GM10248 (cell line): ENCODE measurements at regions of chr16 and their contacts with region 1.

Region 1: GRCh38 chr16:48590476-48590875 is 19.5 kb downstream of the N4BP1 start:
- DNase-seq: no peak
- CTCF ChIP-seq: no peak

Region 2: GRCh38 chr16:48603647-48604376 is 13.3 kb after region 1 on chr16:
- CTCF ChIA-PET with region 1: interaction called, 18 read pairs
- POLR2A ChIA-PET with region 1: no interaction called
- DNase-seq: no peak
- CTCF ChIP-seq: no peak